Naive thymus-derived CD4-positive, alpha-beta T cell (primary cell): ENCODE measurements at regions of chr18 and their contacts with region 1.

Region 1: DNA sequence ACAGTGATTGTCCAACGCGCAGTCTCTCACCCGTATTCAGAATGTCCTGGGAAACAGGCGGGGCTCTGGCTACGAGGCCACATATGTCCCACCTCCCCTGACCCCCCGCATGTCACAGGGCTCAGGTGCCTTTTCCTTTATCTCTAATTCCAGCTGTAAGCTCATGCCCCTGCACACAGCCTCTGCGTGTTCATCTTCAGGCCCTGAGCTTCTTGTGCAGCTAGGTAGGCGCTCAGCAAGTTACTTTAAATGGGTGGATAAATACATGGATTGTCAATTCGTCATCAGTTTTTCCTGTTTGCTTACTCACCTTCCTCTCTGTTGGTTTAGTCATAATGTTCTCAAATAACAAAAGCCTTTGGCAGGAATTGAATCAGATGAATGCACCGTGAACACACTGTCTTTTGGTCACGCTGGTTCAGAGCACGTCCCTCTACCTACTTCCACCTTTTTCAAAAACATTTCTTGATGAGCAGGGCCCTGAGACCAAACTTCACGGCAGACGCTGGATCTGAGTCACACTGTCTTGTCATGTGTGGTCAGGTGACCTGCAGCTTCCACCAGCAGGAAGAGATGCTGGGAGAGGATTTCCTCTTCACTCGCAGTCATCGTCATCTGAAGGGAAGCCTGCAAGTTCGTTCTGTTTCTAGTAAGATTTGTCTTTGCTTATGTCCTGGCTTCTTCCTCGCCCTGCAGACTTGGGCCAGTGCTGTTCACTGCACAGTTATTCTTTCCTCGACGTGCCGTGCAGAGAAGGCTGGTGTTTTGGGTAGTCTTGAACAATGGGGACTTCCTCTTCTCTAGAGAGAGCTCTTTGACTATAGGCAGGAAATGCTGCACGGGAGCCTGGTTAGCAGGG is 138.1 kb downstream of the PTGR3 start:
- DNase-seq: peak; percentile 26 to 75 (median 71)
- ATAC-seq: peak; percentile 85
- H3K4me3 ChIP-seq: peak overlapping the region; percentile 46
- H3K4me3 Mint-ChIP-seq: peak overlapping the region; percentile 82 to 95 (median 87)
- H3K27ac ChIP-seq: peak overlapping the region; percentile 67
- H3K27ac Mint-ChIP-seq: peak overlapping the region; percentile 91 to 99 (median 97)
- H3K4me1 ChIP-seq: peaks cover 28 to 30% of the 10 kb centered on the region in 2 donors
- H3K4me1 Mint-ChIP-seq: peaks cover 29 to 57% (median 39%) of the 10 kb centered on the region in 7 donors
- H3K27me3 ChIP-seq: no peaks in the 10 kb centered on the region
- H3K27me3 Mint-ChIP-seq: no peaks in the 10 kb centered on the region

Region 2: GRCh38 chr18:74291771-74292540 is 778.9 kb before region 1 on chr18 and contains the start of gene CYB5A:
- CTCF ChIA-PET with region 1: no interaction called
- POLR2A ChIA-PET with region 1: no interaction called
- intact Hi-C with region 1: loop called in 1 of 2 experiments (anchors 1 kb)
- DNase-seq: peak; percentile 97 to 99 (median 98)
- ATAC-seq: peak; percentile 99
- H3K4me3 ChIP-seq: peak within 1 kb of the TSS; percentile 91
- H3K4me3 Mint-ChIP-seq: peak within 1 kb of the TSS in 2 of 10 donors; percentile 92 to 94
- H3K27ac ChIP-seq: peak within 1 kb of the TSS; percentile 72
- H3K27ac Mint-ChIP-seq: peak within 1 kb of the TSS in 8 of 9 donors; percentile 56 to 95 (median 87)
- H3K4me1 ChIP-seq: peaks cover 0 to 3% of the 10 kb centered on the region in 2 donors
- H3K4me1 Mint-ChIP-seq: peaks cover 0 to 30% (median 15%) of the 10 kb centered on the region in 7 donors
- H3K27me3 ChIP-seq: no peaks in the 10 kb centered on the region
- H3K27me3 Mint-ChIP-seq: peaks cover 0 to 12% (median 0%) of the 10 kb centered on the region in 5 donors
- total RNA-seq, gene CYB5A: 13.9 to 36.9 (median 22.6) TPM

Region 3: GRCh38 chr18:74631623-74632283 is 439.1 kb before region 1 on chr18:
- CTCF ChIA-PET with region 1: no interaction called
- POLR2A ChIA-PET with region 1: interaction called, 3 read pairs
- intact Hi-C with region 1: loop called in 1 of 2 experiments (anchors 1 kb)
- DNase-seq: peak in 7 of 9 donors; percentile 35 to 81 (median 67)
- ATAC-seq: peak; percentile 91
- H3K4me3 ChIP-seq: peak overlapping the region; percentile 6
- H3K4me3 Mint-ChIP-seq: peak overlapping the region; percentile 68 to 91 (median 86)
- H3K27ac ChIP-seq: peak overlapping the region; percentile 59
- H3K27ac Mint-ChIP-seq: peak overlapping the region; percentile 90 to 98 (median 95)
- H3K4me1 ChIP-seq: peaks cover 24 to 44% of the 10 kb centered on the region in 2 donors
- H3K4me1 Mint-ChIP-seq: peaks cover 46 to 79% (median 67%) of the 10 kb centered on the region in 7 donors
- H3K27me3 ChIP-seq: no peaks in the 10 kb centered on the region
- H3K27me3 Mint-ChIP-seq: no peaks in the 10 kb centered on the region

Region 4: DNA sequence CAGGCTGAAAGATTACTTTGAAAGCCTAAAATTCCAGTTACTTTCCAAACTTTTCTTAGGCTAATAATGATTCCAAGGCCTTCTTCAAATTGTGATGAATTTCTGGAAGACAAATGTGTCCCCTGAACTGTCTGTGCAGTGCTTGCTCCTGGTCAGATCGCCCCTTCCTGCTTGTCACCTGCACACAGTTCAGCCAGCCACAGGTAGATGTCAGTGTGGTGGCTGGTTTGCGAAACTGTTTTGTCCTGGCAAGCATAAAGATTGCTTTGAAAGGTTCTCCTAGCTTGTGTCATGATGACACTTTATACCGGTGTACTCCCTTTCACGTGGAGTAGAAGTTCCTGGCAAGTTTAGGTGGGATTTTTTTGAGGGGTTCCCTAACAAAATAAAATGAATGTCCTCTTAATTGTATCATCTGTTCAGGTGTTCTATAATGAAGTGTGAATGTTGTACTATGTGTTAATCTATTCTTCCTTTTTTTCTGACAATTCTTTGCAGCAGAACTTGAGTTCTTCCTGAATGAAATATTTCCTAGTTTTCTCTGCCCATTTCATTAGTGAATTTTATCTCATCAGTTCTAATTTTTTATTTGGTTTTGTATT is 174.4 kb before region 1 on chr18:
- CTCF ChIA-PET with region 1: no interaction called
- POLR2A ChIA-PET with region 1: interaction called, 3 read pairs
- intact Hi-C with region 1: loop called (anchors 1 to 5 kb)
- DNase-seq: peak in 6 of 9 donors; percentile 19 to 45 (median 36)
- ATAC-seq: peak; percentile 76
- H3K4me3 ChIP-seq: no peak overlapping the region
- H3K4me3 Mint-ChIP-seq: no peak overlapping the region
- H3K27ac ChIP-seq: no peak overlapping the region
- H3K27ac Mint-ChIP-seq: peak overlapping the region in 2 of 9 donors; percentile 1 to 11
- H3K4me1 ChIP-seq: no peaks in the 10 kb centered on the region
- H3K4me1 Mint-ChIP-seq: peaks cover 0 to 21% (median 7%) of the 10 kb centered on the region in 7 donors
- H3K27me3 ChIP-seq: no peaks in the 10 kb centered on the region
- H3K27me3 Mint-ChIP-seq: no peaks in the 10 kb centered on the region

Region 5: DNA sequence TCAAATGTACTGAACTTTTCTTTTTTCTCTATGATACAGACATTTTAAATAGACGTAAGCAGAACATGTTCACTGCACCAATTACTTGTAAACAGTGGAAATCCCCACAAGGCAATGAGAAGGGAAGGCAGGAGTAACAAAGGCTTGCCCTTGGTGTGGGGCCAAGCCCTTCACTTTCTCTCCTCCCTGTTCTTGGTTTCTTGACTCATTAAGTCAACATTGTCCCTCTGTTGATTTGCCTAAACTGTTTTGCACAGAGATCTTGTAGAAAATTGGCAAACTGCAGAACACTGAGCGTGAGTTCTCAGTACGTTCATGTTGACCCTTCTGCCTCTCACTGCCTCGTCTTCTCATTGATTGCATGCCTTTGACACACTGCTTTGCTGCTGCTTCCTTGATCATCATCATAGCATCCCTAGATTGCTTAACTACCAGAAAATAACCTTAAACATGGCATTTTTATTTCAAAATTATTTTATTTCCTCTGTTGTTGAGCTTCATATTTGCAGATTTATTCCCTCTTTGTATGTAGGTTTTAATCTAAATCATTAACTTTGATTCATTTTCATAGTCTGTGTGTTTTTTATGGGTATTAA is 119.6 kb before region 1 on chr18:
- CTCF ChIA-PET with region 1: no interaction called
- POLR2A ChIA-PET with region 1: no interaction called
- intact Hi-C with region 1: loop called in 1 of 2 experiments (anchors 2 kb)
- DNase-seq: peak in 7 of 9 donors; percentile 18 to 65 (median 38)
- ATAC-seq: peak; percentile 93
- H3K4me3 ChIP-seq: no peak overlapping the region
- H3K4me3 Mint-ChIP-seq: peak overlapping the region in 9 of 10 donors; percentile 44 to 83 (median 68)
- H3K27ac ChIP-seq: no peak overlapping the region
- H3K27ac Mint-ChIP-seq: peak overlapping the region; percentile 39 to 93 (median 86)
- H3K4me1 ChIP-seq: peaks cover 0 to 19% of the 10 kb centered on the region in 2 donors
- H3K4me1 Mint-ChIP-seq: peaks cover 13 to 38% (median 32%) of the 10 kb centered on the region in 7 donors
- H3K27me3 ChIP-seq: no peaks in the 10 kb centered on the region
- H3K27me3 Mint-ChIP-seq: no peaks in the 10 kb centered on the region

Region 6: GRCh38 chr18:75029481-75029880 is 41.4 kb before region 1 on chr18:
- CTCF ChIA-PET with region 1: no interaction called
- POLR2A ChIA-PET with region 1: interaction called, 6 read pairs
- intact Hi-C with region 1: loop called in 1 of 2 experiments (anchors 1 kb)
- DNase-seq: peak in 7 of 9 donors; percentile 24 to 73 (median 58)
- ATAC-seq: peak; percentile 73
- H3K4me3 ChIP-seq: no peak overlapping the region
- H3K4me3 Mint-ChIP-seq: peak overlapping the region in 8 of 10 donors; percentile 43 to 62 (median 56)
- H3K27ac ChIP-seq: peak overlapping the region; percentile 14
- H3K27ac Mint-ChIP-seq: peak overlapping the region; percentile 56 to 95 (median 86)
- H3K4me1 ChIP-seq: peaks cover 4 to 10% of the 10 kb centered on the region in 2 donors
- H3K4me1 Mint-ChIP-seq: peaks cover 12 to 31% (median 21%) of the 10 kb centered on the region in 7 donors
- H3K27me3 ChIP-seq: no peaks in the 10 kb centered on the region
- H3K27me3 Mint-ChIP-seq: no peaks in the 10 kb centered on the region

Region 7: DNA sequence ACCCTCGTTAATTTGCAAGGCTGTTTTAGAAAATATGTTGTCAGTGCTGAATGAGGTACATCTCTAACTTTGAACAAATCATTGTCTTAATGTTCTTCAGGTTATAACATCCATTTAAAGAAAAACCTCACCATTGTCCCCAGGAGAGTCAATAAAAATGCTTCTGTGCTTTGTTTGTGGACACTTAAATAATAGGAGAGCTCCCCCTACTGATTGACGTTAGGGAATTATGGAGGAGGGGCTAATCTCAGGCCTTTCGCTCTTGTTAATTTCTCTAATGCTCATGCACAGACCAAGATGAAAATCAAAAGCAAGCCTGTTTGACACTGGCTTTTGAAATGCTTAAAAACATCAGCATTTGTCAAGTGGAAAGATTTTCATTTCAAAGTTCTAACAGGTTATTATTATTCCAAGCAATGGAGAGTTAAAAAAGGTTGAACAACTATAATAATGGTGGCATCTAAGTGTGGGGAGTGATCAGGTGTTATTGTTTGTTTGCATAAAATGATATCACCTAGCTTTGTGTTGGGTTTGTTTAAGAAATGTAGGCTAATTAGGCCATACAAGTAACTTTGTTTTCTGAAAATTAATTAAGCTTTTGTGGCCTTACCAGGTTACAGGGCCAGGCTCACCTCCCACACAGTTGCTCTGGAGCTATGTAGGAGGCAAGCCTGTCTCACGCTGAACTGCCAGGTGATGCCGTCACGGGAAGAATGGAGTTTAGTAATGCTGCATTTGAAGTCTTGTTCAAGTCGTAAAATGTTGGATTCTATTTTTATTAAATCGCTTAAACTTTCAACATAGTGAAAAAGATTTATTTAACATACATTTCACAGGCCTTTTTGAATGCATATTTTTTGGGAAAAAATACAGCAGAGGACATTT is 408.4 kb after region 1 on chr18:
- CTCF ChIA-PET with region 1: no interaction called
- POLR2A ChIA-PET with region 1: no interaction called
- intact Hi-C with region 1: loop called in 1 of 2 experiments (anchors 10 kb)
- DNase-seq: peak in 6 of 9 donors; percentile 15 to 56 (median 49)
- ATAC-seq: peak; percentile 69
- H3K4me3 ChIP-seq: no peak overlapping the region
- H3K4me3 Mint-ChIP-seq: no peak overlapping the region
- H3K27ac ChIP-seq: no peak overlapping the region
- H3K27ac Mint-ChIP-seq: no peak overlapping the region
- H3K4me1 ChIP-seq: no peaks in the 10 kb centered on the region
- H3K4me1 Mint-ChIP-seq: peaks cover 0 to 10% (median 6%) of the 10 kb centered on the region in 7 donors
- H3K27me3 ChIP-seq: peaks cover 0 to 3% of the 10 kb centered on the region in 2 donors
- H3K27me3 Mint-ChIP-seq: peaks cover 9 to 19% (median 13%) of the 10 kb centered on the region in 5 donors